ENCODE measurements at regions of chr2 and their contacts with region 1.

Region 1: DNA sequence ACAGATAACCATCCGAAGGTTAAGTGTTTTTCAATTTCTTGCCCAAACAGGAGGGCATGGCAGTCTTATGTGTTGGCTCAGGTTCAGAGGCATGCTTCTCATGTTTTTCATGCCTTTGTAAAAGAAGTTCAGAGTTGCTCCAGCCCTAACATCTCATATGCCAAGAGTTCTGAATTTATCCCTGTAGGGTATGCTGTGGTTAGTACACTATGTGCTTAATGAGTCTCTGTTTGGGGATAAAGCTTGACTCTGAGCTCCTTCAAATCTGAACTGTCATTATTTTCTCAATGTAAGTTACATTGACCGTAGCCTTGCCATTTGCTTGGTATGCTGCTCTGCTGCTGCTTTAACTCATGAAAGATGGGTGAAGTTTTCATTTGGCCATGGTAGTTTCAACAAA is 67.9 kb upstream of the PNPT1 start:
- DNase-seq: no peak
- ATAC-seq: no peak
- H3K4me3 ChIP-seq: no peak overlapping the region
- H3K27ac ChIP-seq: no peak overlapping the region
- H3K4me1 ChIP-seq: no peaks in the 10 kb centered on the region
- H3K27me3 ChIP-seq: no peaks in the 10 kb centered on the region; a peak in 1 of 4 replicates
- CTCF ChIP-seq: no peak
- EP300 ChIP-seq: no peak
- POLR2A ChIP-seq: no peak
- RAD21 ChIP-seq: no peak

Region 2: DNA sequence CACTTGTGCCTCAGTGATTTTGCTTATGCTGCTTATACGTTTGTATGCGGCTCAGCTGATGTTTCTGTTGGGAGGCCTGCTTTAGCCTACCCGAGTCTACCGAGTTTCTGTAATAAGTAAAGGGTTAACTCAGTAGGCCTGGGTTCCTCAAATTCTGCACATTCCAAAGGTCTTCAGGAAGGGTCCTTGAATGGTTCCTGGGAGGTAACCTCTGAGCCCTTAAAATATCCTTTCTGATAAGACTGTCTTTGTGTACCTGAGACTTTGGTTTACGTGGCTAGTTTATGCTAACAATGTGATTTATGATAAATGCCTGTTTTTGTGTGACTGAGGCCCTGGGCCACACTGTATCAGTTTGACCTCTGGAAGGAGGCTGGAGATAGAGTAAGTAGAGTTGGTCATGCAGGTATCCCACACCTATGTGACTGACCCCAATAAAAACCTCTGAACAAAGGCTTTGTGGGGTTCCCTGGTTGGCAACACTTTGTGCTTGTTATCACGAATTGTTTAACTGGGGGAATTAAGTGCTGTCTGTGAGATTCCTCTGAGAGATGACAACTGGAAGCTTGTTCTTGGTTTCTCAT is 49.0 kb before region 1 on chr2:
- CTCF ChIA-PET with region 1: no interaction called
- POLR2A ChIA-PET with region 1: no interaction called
- RAD21 ChIA-PET with region 1: no interaction called
- SMC1A ChIA-PET with region 1: no interaction called
- in situ Hi-C with region 1: loop called (anchors 5 kb)
- intact Hi-C with region 1: no loop called
- DNase-seq: no peak
- ATAC-seq: no peak
- H3K4me3 ChIP-seq: no peak overlapping the region
- H3K27ac ChIP-seq: no peak overlapping the region
- H3K4me1 ChIP-seq: no peaks in the 10 kb centered on the region
- H3K27me3 ChIP-seq: no peaks in the 10 kb centered on the region; a peak in 2 of 4 replicates
- CTCF ChIP-seq: no peak
- EP300 ChIP-seq: no peak
- POLR2A ChIP-seq: no peak
- RAD21 ChIP-seq: no peak

Region 3: DNA sequence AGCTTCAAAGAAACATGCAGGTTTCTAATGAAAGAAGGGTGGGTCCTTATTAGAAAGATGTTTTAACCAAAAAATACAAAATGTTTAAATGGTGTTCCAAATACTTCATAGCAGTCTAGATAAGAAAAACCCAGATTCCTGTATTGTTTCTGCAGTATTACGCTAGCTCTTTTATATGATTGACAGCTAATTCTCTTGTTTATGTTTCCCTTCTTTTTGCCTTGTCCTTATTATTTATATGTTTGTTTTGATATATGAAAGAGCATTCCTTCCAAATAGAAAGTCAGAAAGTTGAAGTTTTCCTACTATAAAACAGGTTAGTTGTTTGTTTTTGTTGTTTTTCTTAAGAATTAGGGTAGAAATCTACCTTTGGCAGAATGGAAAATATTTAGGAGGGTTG is 26.8 kb before region 1 on chr2:
- CTCF ChIA-PET with region 1: no interaction called
- POLR2A ChIA-PET with region 1: no interaction called
- RAD21 ChIA-PET with region 1: no interaction called
- SMC1A ChIA-PET with region 1: no interaction called
- in situ Hi-C with region 1: no loop called
- intact Hi-C with region 1: no loop called
- DNase-seq: no peak
- ATAC-seq: no peak
- H3K4me3 ChIP-seq: no peak overlapping the region
- H3K27ac ChIP-seq: no peak overlapping the region
- H3K4me1 ChIP-seq: no peaks in the 10 kb centered on the region
- H3K27me3 ChIP-seq: no peaks in the 10 kb centered on the region
- CTCF ChIP-seq: no peak
- EP300 ChIP-seq: no peak
- POLR2A ChIP-seq: no peak
- RAD21 ChIP-seq: no peak

Measured in GM12878 (cell line).